PC-3 (cell line): ENCODE measurements at regions of chr2 and their contacts with region 1.

Region 1: DNA sequence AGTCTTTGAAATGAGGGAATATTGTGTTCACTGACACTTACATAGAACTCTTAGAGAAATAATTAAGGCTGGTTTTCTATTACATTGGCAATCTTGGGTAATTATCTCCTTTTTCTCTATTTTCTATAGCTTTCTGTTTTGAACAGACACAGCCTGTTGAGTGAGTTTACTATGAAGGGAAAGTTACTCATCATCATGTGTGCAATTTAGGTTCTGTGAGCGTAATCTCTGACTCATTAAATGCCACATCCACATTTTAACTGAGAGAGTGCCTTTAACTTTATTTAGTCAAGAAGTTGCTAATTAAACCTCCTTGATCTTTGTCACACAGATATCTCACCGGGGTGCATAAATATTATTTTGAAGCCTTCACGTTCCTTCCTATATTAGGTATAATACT is 174.0 kb upstream of the SLC8A1 start:
- DNase-seq: peak; percentile 75
- ATAC-seq: peak; percentile 88
- H3K4me3 ChIP-seq: no peak overlapping the region
- H3K27ac ChIP-seq: no peak overlapping the region
- H3K4me1 ChIP-seq: peaks cover 10% of the 10 kb centered on the region; the same call in 1 of the 2 replicates
- H3K27me3 ChIP-seq: no peaks in the 10 kb centered on the region
- CTCF ChIP-seq: no peak

Region 2: DNA sequence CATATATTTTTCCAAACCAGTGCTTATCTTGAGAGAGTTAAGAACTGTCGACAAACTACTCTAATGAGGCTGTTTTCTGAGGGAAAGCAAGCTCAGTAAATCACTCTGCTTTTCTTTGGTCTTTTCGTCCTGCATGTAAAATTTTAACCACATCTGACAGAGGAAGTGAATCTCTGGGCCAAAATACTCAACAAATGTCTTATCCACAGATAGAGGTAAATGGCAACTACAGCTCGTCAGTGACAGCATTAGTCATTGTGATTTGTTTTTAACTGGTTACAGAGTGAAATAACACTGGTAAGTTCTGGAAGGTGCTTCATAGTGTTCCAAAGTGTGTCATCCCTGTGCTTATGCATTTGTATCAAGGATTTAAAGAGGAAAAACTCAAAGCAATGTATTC is 91.3 kb before region 1 on chr2:
- CTCF ChIA-PET with region 1: no interaction called
- POLR2A ChIA-PET with region 1: no interaction called
- intact Hi-C with region 1: no loop called
- DNase-seq: no peak
- ATAC-seq: no peak
- H3K4me3 ChIP-seq: no peak overlapping the region
- H3K27ac ChIP-seq: no peak overlapping the region
- H3K4me1 ChIP-seq: no peaks in the 10 kb centered on the region
- H3K27me3 ChIP-seq: no peaks in the 10 kb centered on the region
- CTCF ChIP-seq: no peak

Region 3: DNA sequence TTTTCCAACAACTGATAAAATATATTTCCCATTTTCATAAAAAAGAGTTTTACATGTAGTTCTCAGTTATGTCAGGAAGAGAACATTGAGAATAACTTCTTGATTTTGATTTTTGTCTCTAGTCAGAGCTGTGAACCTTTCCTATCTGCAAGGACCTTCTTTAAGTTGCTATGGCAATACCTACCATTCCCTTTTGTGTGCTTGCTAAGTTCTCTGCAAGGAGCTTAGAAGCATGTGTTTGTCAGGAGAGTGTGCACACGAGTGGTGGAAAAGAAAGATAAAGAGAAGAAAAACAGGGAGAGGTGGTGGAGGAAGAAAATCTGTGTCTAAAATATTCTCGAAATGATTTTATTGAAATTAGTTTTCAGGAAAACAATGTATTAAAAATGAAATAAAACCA is 33.6 kb before region 1 on chr2:
- CTCF ChIA-PET with region 1: no interaction called
- POLR2A ChIA-PET with region 1: no interaction called
- intact Hi-C with region 1: loop called (anchors 1 kb)
- DNase-seq: no peak
- ATAC-seq: no peak
- H3K4me3 ChIP-seq: no peak overlapping the region
- H3K27ac ChIP-seq: no peak overlapping the region
- H3K4me1 ChIP-seq: no peaks in the 10 kb centered on the region
- H3K27me3 ChIP-seq: no peaks in the 10 kb centered on the region
- CTCF ChIP-seq: no peak

Region 4: DNA sequence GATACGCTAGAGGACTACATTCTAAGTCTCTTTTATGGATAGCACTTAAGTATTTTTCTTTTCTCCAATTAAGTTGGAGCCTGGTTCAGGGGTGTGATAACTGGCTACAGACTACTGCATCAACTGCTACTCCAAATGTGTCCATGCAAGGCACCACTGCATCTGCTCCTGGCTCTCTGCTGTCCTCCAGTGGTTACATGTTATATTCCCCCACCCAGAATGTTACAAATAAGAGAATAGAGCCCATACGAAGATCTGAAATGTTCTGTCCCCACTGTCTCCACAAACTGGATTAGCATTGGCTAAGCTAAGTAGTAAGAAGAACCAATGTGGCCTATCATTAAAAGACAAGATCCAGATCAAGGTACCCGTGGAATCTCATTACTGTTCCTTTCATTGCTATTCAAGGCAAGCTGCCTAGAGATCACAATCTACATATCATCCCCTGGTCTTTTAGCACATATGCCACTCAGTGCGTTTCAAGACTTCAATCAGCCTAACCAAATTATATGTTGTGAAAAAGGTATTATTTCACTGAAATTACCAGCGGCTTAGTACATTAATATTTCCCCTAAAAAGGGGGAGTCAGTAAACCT is 134.3 kb after region 1 on chr2:
- CTCF ChIA-PET with region 1: no interaction called
- POLR2A ChIA-PET with region 1: no interaction called
- intact Hi-C with region 1: no loop called
- DNase-seq: peak; percentile 80
- ATAC-seq: peak; percentile 96
- H3K4me3 ChIP-seq: no peak overlapping the region
- H3K27ac ChIP-seq: no peak overlapping the region
- H3K4me1 ChIP-seq: no peaks in the 10 kb centered on the region
- H3K27me3 ChIP-seq: no peaks in the 10 kb centered on the region
- CTCF ChIP-seq: peak; percentile 94